HepG2 (cell line): ENCODE measurements at regions of chr17 and their contacts with region 1.

Region 1: DNA sequence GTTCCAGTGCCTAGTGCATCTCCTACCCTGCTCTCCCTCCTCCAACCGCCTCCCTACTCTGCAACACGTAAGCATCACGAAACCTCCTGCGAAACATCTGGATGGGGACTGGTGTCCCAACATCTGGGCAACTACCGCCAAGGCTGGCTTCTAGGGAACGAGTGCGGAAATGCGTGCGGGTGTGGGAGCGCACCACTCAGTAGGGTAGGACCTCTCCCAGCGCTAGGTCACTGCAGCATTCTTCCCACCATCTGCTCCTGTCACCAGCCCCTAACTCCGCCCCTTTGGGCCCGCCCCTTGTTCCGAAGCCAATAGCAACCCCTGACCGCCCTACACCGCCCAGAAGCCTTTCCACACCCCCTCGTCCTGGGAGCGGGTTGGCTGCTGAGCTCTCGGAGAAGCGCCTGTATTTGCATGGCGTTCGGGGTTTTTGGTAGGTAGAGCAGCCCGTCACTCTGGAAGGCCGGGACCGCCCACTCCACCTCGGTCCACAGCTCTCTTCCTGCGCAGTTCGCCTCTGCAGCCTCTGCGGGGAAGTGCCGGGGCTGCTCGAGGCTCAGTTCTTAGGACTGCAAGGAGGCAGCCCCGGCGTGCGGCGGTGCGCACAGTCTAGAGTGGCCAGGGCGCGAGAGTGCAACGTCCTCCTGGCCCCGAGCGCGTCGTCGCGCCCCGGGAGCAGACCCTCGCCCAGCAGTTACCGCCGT is at the start of gene HS3ST3B1:
- DNase-seq: peak; percentile 99
- ATAC-seq: peak; percentile 83
- H3K4me3 ChIP-seq: peak within 1 kb of the TSS; percentile 92 to 99 (median 99)
- H3K27ac ChIP-seq: peak within 1 kb of the TSS; percentile 93
- H3K4me1 ChIP-seq: peaks cover 17% of the 10 kb centered on the region
- H3K27me3 ChIP-seq: peaks cover 0 to 10% of the 10 kb centered on the region in 2 experiments; a peak in 2 of 5 replicates
- CTCF ChIP-seq: peak; percentile 37; the same call in 1 of the 2 replicates
- EP300 ChIP-seq: peak in 1 of 2 experiments; percentile 12; a peak in 1 of 4 replicates
- POLR2A ChIP-seq: peak; percentile 93 to 94
- RAD21 ChIP-seq: peak; percentile 60; the same call in 1 of the 2 replicates
- total RNA-seq, gene HS3ST3B1: 35.3 and 39.5 TPM in 2 replicates

Region 2: DNA sequence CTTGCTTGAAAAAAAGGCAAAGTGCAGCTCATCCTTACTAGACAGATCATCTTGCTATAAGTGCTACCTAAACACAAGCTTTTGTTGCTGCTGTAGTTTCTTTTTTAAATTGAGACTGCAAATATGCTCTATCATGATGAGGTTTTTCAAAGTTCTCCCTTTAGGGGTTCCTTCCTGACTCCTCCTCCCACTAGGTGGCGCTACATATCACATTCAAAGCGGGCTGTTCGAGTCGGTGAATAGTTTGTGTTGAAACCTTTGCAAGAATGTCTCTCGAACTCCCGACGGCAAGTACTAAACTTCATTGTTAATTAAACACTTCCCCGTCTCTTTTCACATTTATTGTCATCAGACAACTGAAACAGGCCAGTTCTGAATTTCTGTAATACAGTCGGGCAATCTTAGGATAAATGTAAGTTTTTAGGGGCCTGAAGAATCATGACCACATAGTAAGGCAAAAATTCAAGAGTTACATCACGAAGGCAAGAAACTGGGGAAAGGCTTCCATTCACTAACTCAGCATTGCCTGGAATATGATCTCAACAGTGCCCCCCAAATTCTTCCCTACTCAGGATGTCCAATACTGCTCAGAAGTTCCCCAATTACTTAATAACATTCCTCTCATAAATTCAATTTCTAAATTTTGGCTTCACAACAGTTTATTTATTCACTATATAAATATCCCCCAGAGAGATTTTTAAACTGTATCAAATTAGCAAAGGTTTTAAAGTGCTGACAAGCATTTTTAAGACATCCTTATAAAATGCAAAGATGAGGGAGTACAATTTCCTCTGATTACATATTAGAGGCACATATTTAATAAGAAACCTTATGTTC is 705.7 kb before region 1 on chr17:
- CTCF ChIA-PET with region 1: interaction called, 7 read pairs
- POLR2A ChIA-PET with region 1: no interaction called
- in situ Hi-C with region 1: loop called (anchors 5 kb)
- intact Hi-C with region 1: loop called (anchors 1 kb)
- DNase-seq: peak; percentile 68
- ATAC-seq: peak; percentile 78
- H3K4me3 ChIP-seq: no peak overlapping the region
- H3K27ac ChIP-seq: no peak overlapping the region
- H3K4me1 ChIP-seq: peaks cover 38% of the 10 kb centered on the region
- H3K27me3 ChIP-seq: peaks cover 0 to 19% of the 10 kb centered on the region in 2 experiments; a peak in 4 of 5 replicates
- CTCF ChIP-seq: peak; percentile 80
- EP300 ChIP-seq: no peak
- POLR2A ChIP-seq: no peak
- RAD21 ChIP-seq: peak; percentile 53; the same call in 1 of the 2 replicates

Region 3: GRCh38 chr17:14203388-14203787 is 97.3 kb before region 1 on chr17:
- CTCF ChIA-PET with region 1: no interaction called
- POLR2A ChIA-PET with region 1: interaction called, 3 read pairs
- in situ Hi-C with region 1: no loop called
- intact Hi-C with region 1: loop called (anchors 5 kb)
- DNase-seq: no peak
- ATAC-seq: no peak; the same call in 2 of the 3 replicates
- H3K4me3 ChIP-seq: no peak overlapping the region
- H3K27ac ChIP-seq: no peak overlapping the region
- H3K4me1 ChIP-seq: peaks cover 4% of the 10 kb centered on the region; the same call in 1 of the 2 replicates
- H3K27me3 ChIP-seq: no peaks in the 10 kb centered on the region
- CTCF ChIP-seq: no peak
- EP300 ChIP-seq: no peak
- POLR2A ChIP-seq: no peak
- RAD21 ChIP-seq: no peak

Region 4: GRCh38 chr17:14245020-14245419 is 55.7 kb before region 1 on chr17:
- CTCF ChIA-PET with region 1: no interaction called
- POLR2A ChIA-PET with region 1: no interaction called
- in situ Hi-C with region 1: no loop called
- intact Hi-C with region 1: no loop called
- DNase-seq: no peak
- ATAC-seq: no peak
- H3K4me3 ChIP-seq: no peak overlapping the region
- H3K27ac ChIP-seq: no peak overlapping the region
- H3K4me1 ChIP-seq: no peaks in the 10 kb centered on the region
- H3K27me3 ChIP-seq: no peaks in the 10 kb centered on the region
- CTCF ChIP-seq: no peak
- EP300 ChIP-seq: no peak
- POLR2A ChIP-seq: no peak
- RAD21 ChIP-seq: no peak

Region 5: DNA sequence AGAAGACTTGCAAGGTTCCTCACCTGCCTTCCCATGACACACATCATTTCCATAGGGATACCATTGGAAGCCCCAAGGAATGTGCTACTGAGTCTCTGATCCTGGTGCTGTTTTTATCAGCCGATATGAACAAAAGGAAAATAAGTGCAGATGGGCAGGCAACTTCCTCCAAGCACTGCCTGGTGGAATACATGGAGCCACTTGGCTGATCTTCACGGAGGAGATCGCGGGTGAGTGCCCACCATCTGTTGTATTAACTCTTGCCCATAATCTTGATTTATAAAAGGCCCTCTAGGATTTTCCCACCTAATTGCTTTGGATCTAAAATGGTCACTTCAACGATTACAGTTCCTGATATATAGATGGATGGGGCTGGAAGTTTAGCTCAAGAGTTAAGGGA is 39.3 kb before region 1 on chr17:
- CTCF ChIA-PET with region 1: no interaction called
- POLR2A ChIA-PET with region 1: no interaction called
- in situ Hi-C with region 1: no loop called
- intact Hi-C with region 1: no loop called
- DNase-seq: no peak
- ATAC-seq: no peak
- H3K4me3 ChIP-seq: no peak overlapping the region
- H3K27ac ChIP-seq: no peak overlapping the region
- H3K4me1 ChIP-seq: no peaks in the 10 kb centered on the region
- H3K27me3 ChIP-seq: peaks cover 0 to 30% of the 10 kb centered on the region in 2 experiments; a peak in 2 of 5 replicates
- CTCF ChIP-seq: no peak
- EP300 ChIP-seq: no peak
- POLR2A ChIP-seq: no peak
- RAD21 ChIP-seq: no peak

Region 6: DNA sequence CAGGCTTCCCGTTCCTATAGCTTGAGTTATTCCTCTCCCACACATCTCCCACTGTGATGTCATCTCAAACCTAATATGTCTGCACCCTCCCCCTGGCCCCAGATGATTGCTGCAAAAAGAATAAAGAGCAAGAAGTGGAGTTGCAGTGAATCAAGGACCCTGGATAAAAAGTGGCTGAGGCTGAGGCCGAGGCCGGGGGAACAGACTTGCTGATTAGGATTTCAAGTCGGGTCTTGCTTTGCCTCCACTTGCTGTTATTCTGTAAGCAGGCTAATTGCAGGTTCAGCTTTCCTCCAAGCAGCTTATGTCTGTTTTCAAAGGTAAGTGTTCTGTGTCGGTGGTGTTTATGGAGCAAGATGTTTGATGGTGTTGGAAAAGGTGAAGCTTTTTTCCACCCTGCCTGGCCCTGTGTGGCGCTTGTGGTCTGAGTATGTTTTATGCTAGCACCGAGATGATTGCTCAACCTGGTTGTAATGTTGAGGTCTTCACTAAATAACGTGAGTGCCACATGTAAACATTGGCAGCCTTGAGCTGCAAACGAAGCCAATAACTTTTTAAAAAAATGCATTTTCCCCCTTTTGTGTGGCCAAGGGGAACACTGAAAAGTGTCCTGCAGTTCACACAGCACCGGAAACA is 15.5 kb after region 1 on chr17:
- CTCF ChIA-PET with region 1: no interaction called
- POLR2A ChIA-PET with region 1: interaction called, 11 read pairs
- in situ Hi-C with region 1: no loop called
- intact Hi-C with region 1: no loop called
- DNase-seq: peak; percentile 71
- ATAC-seq: peak; percentile 74
- H3K4me3 ChIP-seq: peak overlapping the region in 1 of 3 experiments; percentile 9; a peak in 1 of 6 replicates
- H3K27ac ChIP-seq: peak overlapping the region; percentile 41
- H3K4me1 ChIP-seq: peaks cover 79% of the 10 kb centered on the region
- H3K27me3 ChIP-seq: no peaks in the 10 kb centered on the region
- CTCF ChIP-seq: peak; percentile 58
- EP300 ChIP-seq: no peak
- POLR2A ChIP-seq: no peak
- RAD21 ChIP-seq: peak; percentile 34; the same call in 1 of the 2 replicates

Region 7: DNA sequence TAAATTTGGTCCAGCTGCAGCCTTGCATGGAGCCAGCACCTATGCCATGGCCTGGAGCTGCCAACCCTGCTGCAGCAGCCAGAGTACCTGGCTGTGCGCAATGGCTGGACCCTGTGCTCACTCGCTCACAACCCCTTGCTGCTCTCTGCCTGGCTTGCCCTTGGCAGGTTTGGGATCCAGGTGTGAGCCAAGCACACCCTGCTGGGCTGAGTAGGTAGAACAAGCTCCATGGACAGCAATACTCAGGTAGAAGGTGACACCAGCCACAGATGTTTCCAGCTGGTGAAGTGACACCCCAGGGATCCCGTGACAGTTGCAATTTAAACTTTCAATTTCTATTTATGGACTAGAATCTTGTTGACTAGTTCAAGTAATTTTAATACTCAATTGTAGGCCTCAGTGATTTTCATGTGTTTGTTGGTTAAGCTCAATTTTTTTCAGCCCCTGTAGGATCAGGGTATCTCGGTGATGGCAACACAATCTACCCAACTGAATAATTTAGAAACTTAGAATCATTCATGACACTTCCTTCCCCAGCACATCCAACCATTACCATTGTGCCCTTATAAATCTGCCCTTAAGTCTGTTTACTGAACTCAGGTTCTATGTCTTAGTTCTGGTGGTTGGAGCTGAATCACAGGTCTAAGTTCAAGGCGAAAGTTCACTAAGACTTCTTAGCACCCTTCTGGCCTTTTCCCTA is 484.4 kb after region 1 on chr17:
- CTCF ChIA-PET with region 1: no interaction called
- POLR2A ChIA-PET with region 1: no interaction called
- in situ Hi-C with region 1: no loop called
- intact Hi-C with region 1: loop called (anchors 10 kb)
- DNase-seq: peak; percentile 47
- ATAC-seq: peak; percentile 99
- H3K4me3 ChIP-seq: no peak overlapping the region
- H3K27ac ChIP-seq: no peak overlapping the region
- H3K4me1 ChIP-seq: no peaks in the 10 kb centered on the region
- H3K27me3 ChIP-seq: peaks cover 0 to 5% of the 10 kb centered on the region in 2 experiments; a peak in 1 of 5 replicates
- CTCF ChIP-seq: peak; percentile 89
- EP300 ChIP-seq: no peak
- POLR2A ChIP-seq: no peak
- RAD21 ChIP-seq: peak; percentile 64